ENCODE measurements at regions of chr22 and their contacts with region 1.

Region 1: DNA sequence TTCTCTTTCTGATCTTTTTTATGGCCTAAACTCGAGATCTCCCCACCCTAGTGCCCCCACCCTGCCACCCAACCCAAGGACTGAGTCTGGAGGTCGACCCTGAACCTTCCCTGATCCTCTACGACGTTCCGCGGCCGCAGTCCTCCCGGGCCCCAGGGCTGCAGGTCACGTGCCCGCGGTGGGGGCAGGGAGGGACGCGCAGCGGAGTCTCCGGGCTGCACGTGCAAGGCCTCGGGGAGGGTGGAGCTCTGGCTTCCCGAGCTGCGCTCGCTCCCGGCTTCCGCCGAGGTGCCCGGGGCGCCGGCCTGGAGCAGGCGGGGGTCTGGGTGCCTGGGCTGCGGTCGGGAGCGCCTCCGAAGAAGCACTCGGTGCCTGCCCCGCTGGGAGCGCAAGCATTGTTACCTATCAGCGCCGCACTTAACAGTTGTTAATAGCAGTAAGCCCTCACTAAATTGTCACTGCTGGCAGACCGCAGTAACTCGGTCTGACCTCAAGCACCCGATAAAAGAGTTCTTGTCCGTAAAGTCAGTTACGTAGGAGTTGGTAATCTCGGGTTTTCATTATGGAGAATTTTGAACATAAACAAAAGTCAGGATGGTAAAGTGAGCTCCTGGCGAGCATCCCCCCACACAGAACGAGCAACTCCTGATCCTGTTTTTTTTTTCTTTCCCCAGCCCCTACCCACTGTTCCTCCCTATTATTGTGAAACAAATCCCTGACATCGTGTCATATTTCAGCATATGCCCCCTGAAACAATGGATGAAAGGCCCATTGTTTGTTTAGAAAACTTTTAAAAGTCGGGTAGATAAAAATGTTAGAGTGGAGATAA is 69.7 kb upstream of the EP300 start:
- DNase-seq: peak; percentile 96
- H3K4me3 ChIP-seq: peak overlapping the region; percentile 10 to 77 (median 38)
- H3K27ac ChIP-seq: peak overlapping the region; percentile 98 to 99 (median 99)
- H3K4me1 ChIP-seq: peaks cover 10 to 20% of the 10 kb centered on the region in 2 donors
- H3K27me3 ChIP-seq: no peaks in the 10 kb centered on the region
- CTCF ChIP-seq: peak in 1 of 6 experiments; percentile 7
- POLR2A ChIP-seq: peak in 1 of 2 donors; percentile 85

Region 2: GRCh38 chr22:40950962-40951794 is 71.5 kb before region 1 on chr22 and contains the start of gene RBX1:
- intact Hi-C with region 1: loop called (anchors 5 kb)
- DNase-seq: peak; percentile 99
- H3K4me3 ChIP-seq: peak within 1 kb of the TSS; percentile 65 to 91 (median 86)
- H3K27ac ChIP-seq: peak within 1 kb of the TSS; percentile 86 to 92 (median 91)
- H3K4me1 ChIP-seq: peaks cover 6 to 11% of the 10 kb centered on the region in 2 donors
- H3K27me3 ChIP-seq: no peaks in the 10 kb centered on the region
- CTCF ChIP-seq: no peak
- POLR2A ChIP-seq: peak in 1 of 2 donors; percentile 63
- total RNA-seq, gene RBX1: 52.5 to 79.8 (median 61.6) TPM